SK-N-SH (cell line): ENCODE measurements at regions of chr9 and their contacts with region 1.

Region 1: DNA sequence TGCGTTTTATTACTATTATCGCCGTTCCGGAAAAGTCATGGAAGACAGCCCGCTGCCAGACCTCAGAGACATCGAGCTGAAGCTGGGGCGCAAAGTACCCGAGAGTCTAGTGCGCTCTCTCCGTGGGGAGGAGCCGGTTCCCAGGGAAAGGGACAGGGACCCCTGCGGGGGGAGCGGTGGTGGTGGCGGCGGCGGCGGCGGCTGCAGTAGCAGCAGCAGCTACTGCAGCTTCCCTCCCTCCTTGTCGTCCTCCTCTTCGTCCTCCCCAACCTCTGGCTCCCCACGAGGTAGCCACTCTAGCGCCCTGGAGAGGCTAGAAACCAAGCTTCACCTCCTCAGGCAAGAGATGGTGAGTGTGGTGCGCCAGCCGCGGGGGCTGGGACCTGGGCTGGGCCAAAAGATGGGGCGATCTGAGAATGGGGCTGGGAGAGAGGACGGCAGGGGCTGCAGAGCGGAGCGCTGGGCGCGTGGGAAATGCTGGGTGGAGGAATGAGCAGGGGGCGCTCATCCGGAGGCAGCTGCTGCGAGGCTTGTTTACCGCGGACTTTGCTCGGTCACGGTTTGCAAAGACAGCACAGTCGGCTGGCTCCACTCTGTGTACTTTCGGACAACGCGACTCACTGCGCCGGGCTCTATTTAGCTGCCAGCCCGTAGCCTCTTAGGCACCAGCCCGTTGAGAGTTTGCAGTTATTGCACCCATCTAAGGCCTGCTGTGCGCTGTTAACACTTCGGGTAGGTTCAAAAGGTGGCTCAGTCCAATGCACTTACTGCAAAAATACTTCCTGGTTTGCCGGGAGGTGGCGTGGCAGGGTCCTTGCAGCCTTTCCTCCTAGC is 1.1 kb downstream of the LURAP1L start:
- DNase-seq: peak; percentile 81
- H3K4me3 ChIP-seq: peak overlapping the region; percentile 74 to 75
- H3K27ac ChIP-seq: peak overlapping the region; percentile 64 to 87; a peak in 3 of 4 replicates
- H3K4me1 ChIP-seq: peaks cover 0 to 5% of the 10 kb centered on the region in 2 experiments; a peak in 2 of 4 replicates
- H3K27me3 ChIP-seq: no peaks in the 10 kb centered on the region
- CTCF ChIP-seq: peak; percentile 60
- EP300 ChIP-seq: no peak; a peak in 1 of 4 replicates
- RAD21 ChIP-seq: peak; percentile 74

Region 2: GRCh38 chr9:12595400-12595799 is 180.5 kb before region 1 on chr9:
- CTCF ChIA-PET with region 1: no interaction called
- POLR2A ChIA-PET with region 1: no interaction called
- DNase-seq: no peak
- H3K4me3 ChIP-seq: no peak overlapping the region
- H3K27ac ChIP-seq: no peak overlapping the region
- H3K4me1 ChIP-seq: no peaks in the 10 kb centered on the region
- H3K27me3 ChIP-seq: no peaks in the 10 kb centered on the region
- CTCF ChIP-seq: no peak
- EP300 ChIP-seq: no peak
- RAD21 ChIP-seq: no peak

Region 3: GRCh38 chr9:12702160-12702758 is 73.6 kb before region 1 on chr9:
- CTCF ChIA-PET with region 1: interaction called, 11 read pairs
- POLR2A ChIA-PET with region 1: no interaction called
- DNase-seq: peak; percentile 30
- H3K4me3 ChIP-seq: peak overlapping the region in 1 of 2 experiments; percentile 41; a peak in 1 of 4 replicates
- H3K27ac ChIP-seq: no peak overlapping the region
- H3K4me1 ChIP-seq: peaks cover 0 to 14% of the 10 kb centered on the region in 2 experiments; a peak in 2 of 4 replicates
- H3K27me3 ChIP-seq: no peaks in the 10 kb centered on the region
- CTCF ChIP-seq: peak; percentile 76
- EP300 ChIP-seq: no peak
- RAD21 ChIP-seq: peak; percentile 96

Region 4: GRCh38 chr9:12798066-12798770 is 22.3 kb after region 1 on chr9:
- CTCF ChIA-PET with region 1: interaction called, 13 read pairs
- POLR2A ChIA-PET with region 1: interaction called, 4 read pairs
- DNase-seq: no peak
- H3K4me3 ChIP-seq: no peak overlapping the region
- H3K27ac ChIP-seq: no peak overlapping the region
- H3K4me1 ChIP-seq: no peaks in the 10 kb centered on the region; a peak in 1 of 4 replicates
- H3K27me3 ChIP-seq: no peaks in the 10 kb centered on the region
- CTCF ChIP-seq: no peak
- EP300 ChIP-seq: no peak
- RAD21 ChIP-seq: no peak

Region 5: GRCh38 chr9:12813960-12814876 is 38.3 kb after region 1 on chr9:
- CTCF ChIA-PET with region 1: interaction called, 21 read pairs
- POLR2A ChIA-PET with region 1: interaction called, 14 read pairs
- DNase-seq: peak; percentile 59
- H3K4me3 ChIP-seq: peak overlapping the region; percentile 6 to 31; a peak in 2 of 4 replicates
- H3K27ac ChIP-seq: peak overlapping the region; percentile 96
- H3K4me1 ChIP-seq: peaks cover 21 to 22% of the 10 kb centered on the region in 2 experiments; a peak in 3 of 4 replicates
- H3K27me3 ChIP-seq: no peaks in the 10 kb centered on the region
- CTCF ChIP-seq: peak; percentile 50
- EP300 ChIP-seq: peak; percentile 89 to 94
- RAD21 ChIP-seq: peak; percentile 34

Region 6: GRCh38 chr9:12819436-12820185 is 43.7 kb after region 1 on chr9:
- CTCF ChIA-PET with region 1: interaction called, 21 read pairs
- POLR2A ChIA-PET with region 1: interaction called, 14 read pairs
- DNase-seq: no peak
- H3K4me3 ChIP-seq: no peak overlapping the region; a peak in 1 of 4 replicates
- H3K27ac ChIP-seq: peak overlapping the region in 1 of 2 experiments; percentile 51; a peak in 2 of 4 replicates
- H3K4me1 ChIP-seq: peaks cover 4 to 17% of the 10 kb centered on the region in 2 experiments; a peak in 2 of 4 replicates
- H3K27me3 ChIP-seq: no peaks in the 10 kb centered on the region
- CTCF ChIP-seq: peak; percentile 65
- EP300 ChIP-seq: no peak
- RAD21 ChIP-seq: peak; percentile 56

Region 7: GRCh38 chr9:12884737-12885414 is 109.0 kb after region 1 on chr9:
- CTCF ChIA-PET with region 1: interaction called, 15 read pairs
- POLR2A ChIA-PET with region 1: interaction called, 3 read pairs
- DNase-seq: peak; percentile 29
- H3K4me3 ChIP-seq: no peak overlapping the region; a peak in 1 of 4 replicates
- H3K27ac ChIP-seq: no peak overlapping the region
- H3K4me1 ChIP-seq: no peaks in the 10 kb centered on the region; a peak in 2 of 4 replicates
- H3K27me3 ChIP-seq: no peaks in the 10 kb centered on the region
- CTCF ChIP-seq: peak; percentile 71
- EP300 ChIP-seq: no peak
- RAD21 ChIP-seq: peak; percentile 92

Region 8: DNA sequence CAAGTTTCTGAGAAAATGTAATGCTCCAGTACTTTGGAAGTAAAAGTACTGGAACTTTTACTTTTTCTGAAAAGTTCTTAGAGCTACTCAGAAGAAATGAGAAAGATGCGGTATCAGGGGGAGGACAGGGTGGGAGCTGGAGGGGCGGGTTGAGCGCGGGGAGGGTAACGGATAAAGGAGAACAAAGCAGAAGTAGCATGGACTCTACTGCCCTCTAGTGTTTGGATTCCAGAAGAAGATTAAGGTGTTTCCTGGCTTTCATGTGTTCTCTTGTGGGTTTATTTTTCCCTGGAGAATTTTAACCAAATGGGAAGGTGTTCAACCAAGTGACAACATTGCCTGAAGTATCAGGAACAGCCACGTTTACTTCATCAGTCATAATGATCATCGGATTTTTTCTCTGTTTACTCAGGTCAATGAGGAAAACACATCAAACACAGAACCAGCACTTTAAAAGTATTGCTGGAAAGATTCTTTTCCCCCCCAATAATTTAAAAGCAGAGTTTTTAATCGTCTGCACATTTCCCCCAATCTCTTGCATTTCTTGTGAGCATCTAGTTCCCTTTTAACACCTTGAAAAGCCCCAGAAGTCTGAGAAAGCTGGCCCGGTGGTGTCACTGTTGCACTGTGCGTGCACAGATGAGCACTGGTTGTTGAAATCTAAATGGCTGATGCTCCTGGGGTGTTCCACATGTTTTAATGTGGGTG is 313.0 kb after region 1 on chr9:
- CTCF ChIA-PET with region 1: interaction called, 10 read pairs
- POLR2A ChIA-PET with region 1: no interaction called
- DNase-seq: peak; percentile 79
- H3K4me3 ChIP-seq: peak overlapping the region in 1 of 2 experiments; percentile 49; a peak in 2 of 4 replicates
- H3K27ac ChIP-seq: no peak overlapping the region
- H3K4me1 ChIP-seq: peaks cover 0 to 2% of the 10 kb centered on the region in 2 experiments; a peak in 2 of 4 replicates
- H3K27me3 ChIP-seq: no peaks in the 10 kb centered on the region
- CTCF ChIP-seq: peak; percentile 74
- EP300 ChIP-seq: no peak
- RAD21 ChIP-seq: peak; percentile 78